Dendritic cell treated with granulocyte-macrophage colony-stimulating factor and Interleukin-4, amounts not matched to agents 40 ng/mL and 50 ng/mL, for 4 days (primary cell): ENCODE measurements at regions of chr5 and their contacts with region 1.

Region 1: DNA sequence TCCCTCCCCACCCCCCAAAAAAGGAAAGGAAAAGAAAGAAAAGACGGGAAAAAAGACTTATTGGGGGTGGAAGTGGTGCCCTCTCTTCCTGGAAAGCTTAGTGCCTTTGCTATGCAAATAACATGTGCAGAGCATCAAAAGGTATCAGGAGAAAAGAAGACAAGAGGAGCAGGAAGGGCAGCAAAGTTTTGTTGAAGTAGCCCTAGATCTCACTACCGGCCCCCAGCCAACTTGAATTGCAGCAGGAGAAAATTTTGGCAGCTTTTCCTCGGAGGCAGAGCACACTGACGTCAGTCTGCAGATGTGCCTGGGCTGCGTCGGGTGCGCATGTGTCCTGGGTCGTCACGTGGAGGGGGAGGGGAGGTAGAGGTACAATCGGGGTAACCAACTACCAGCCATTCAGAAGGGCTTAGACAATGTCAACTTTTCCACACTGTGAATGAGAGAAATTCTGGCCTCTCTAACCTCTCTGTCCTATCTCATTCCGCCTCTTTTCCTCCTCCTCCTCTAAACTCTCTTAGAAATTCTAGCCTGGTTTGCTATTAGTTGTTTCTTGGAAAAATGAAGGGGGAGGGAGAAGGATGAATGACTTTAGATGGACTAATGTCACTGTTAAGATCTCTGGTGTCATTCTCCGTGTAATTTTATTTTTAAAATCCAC is at the start of gene ADAMTS6:
- H3K4me3 Mint-ChIP-seq: peak within 1 kb of the TSS; percentile 86
- H3K27ac Mint-ChIP-seq: peak within 1 kb of the TSS; percentile 78
- H3K4me1 Mint-ChIP-seq: peaks cover 13% of the 10 kb centered on the region
- H3K27me3 Mint-ChIP-seq: peaks cover 5% of the 10 kb centered on the region

Region 2: GRCh38 chr5:64634997-64635686 is 846.6 kb before region 1 on chr5:
- intact Hi-C with region 1: loop called (anchors 5 kb)
- H3K4me3 Mint-ChIP-seq: no peak overlapping the region
- H3K27ac Mint-ChIP-seq: no peak overlapping the region
- H3K4me1 Mint-ChIP-seq: peaks cover 7% of the 10 kb centered on the region
- H3K27me3 Mint-ChIP-seq: peaks cover 7% of the 10 kb centered on the region

Region 3: DNA sequence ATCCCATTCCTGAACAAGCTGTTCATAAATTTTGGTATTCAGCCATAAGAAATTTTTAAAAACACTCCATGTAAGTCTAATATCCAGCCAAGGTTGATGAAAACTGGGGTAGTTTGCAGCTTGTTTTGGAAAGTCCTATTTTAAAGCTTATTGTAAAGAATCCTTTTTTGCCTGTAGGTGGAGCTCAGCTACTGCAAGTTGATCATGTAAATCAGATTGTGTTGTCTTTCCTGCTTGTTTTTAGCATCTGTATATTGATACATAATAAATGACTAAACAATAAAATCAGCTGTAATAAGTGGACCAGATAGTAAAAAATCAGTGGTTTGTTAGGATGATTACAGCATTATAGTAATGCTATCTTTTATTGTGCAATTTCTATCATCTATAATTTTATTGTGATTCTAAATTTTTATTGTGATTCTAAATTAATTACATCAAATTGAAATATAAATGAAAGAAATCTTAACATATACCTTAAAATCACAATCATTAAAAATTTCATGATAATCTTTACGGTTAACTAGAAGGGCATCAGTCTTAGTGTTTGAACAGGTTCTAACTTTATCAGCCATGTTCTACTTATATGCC is 670.6 kb before region 1 on chr5:
- intact Hi-C with region 1: loop called (anchors 1 kb)
- H3K4me3 Mint-ChIP-seq: no peak overlapping the region
- H3K27ac Mint-ChIP-seq: no peak overlapping the region
- H3K4me1 Mint-ChIP-seq: no peaks in the 10 kb centered on the region
- H3K27me3 Mint-ChIP-seq: no peaks in the 10 kb centered on the region

Region 4: GRCh38 chr5:64958757-64959391 is 522.9 kb before region 1 on chr5:
- intact Hi-C with region 1: loop called (anchors 2 kb)
- H3K4me3 Mint-ChIP-seq: no peak overlapping the region
- H3K27ac Mint-ChIP-seq: no peak overlapping the region
- H3K4me1 Mint-ChIP-seq: peaks cover 5% of the 10 kb centered on the region
- H3K27me3 Mint-ChIP-seq: no peaks in the 10 kb centered on the region

Region 5: DNA sequence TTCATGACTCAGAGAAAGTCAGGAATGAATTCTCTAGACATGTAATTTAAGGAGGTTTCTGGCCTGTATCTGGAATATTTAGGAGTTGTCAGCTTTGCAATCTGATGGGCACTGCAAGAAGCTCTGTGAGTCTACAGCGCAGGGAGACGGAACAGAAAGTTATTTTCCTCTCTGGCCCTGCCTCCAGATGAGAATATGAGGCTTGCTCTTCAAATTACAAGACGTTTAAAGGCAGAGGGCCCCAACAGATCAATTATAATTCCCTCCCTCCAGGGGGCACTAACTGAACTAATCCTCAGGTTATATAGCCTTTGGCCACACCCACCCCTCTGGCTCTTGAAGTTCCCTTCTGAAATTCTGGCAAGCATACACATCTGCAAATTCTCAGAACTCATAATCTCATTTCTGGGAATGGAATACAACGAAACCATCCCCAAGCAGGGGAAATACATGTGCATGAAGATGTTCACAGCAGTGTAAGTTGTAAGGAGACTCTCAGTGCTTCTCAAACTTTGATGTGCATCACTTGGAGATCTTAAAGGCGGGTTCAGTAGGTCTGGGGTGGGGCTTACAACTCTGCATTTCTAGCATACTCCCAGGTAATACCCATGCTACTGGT is 405.4 kb before region 1 on chr5:
- intact Hi-C with region 1: loop called (anchors 5 kb)
- H3K4me3 Mint-ChIP-seq: no peak overlapping the region
- H3K27ac Mint-ChIP-seq: peak overlapping the region; percentile 21
- H3K4me1 Mint-ChIP-seq: peaks cover 54% of the 10 kb centered on the region
- H3K27me3 Mint-ChIP-seq: peaks cover 19% of the 10 kb centered on the region

Region 6: DNA sequence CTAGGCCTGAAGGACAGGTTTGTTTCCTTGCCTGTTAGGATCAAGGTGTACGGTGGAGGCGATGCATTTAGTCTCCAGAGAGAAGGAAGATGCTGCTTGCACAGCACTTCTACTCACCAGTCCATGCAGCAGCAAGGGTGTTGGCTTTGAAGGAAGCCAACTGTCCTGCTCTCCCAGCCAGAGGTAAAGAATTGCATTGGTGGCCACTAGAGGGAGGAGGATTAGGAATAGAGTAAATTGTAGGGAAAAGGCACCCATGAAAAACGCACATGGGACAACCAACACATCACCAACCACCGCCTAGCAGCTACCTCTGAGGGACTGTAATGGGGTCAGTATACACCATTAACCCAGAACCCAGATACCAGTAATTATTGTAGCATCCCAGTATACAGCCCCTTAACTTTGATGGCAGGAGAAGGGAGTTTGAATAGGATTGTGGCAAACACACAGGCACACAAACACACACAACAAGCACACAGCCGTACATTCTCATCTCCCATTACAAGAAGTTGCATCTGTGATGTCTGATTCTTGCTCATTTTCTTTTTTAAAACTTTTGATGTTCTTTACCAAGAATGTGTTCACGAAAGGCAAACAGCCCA is 267.7 kb before region 1 on chr5:
- intact Hi-C with region 1: loop called (anchors 10 kb)
- H3K4me3 Mint-ChIP-seq: no peak overlapping the region
- H3K27ac Mint-ChIP-seq: no peak overlapping the region
- H3K4me1 Mint-ChIP-seq: no peaks in the 10 kb centered on the region
- H3K27me3 Mint-ChIP-seq: no peaks in the 10 kb centered on the region

Region 7: DNA sequence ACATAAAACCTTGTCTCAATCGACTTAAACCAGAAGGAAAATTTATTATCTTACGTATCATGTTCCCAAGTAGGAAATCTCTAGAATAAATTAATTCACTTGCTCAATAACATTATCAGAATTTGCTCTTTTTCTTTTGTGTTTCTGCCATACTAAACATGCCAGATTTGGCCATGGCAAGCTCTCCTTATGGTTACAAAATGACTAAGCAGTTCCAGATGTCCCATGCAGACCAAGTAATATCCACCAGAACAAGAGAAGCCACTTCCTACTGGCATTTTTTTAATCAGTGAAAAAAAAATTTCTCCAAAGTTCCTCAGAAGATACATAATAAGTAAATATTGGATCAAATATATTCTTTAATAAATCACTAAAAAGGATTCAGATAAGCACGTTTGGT is 25.2 kb after region 1 on chr5:
- intact Hi-C with region 1: no loop called
- H3K4me3 Mint-ChIP-seq: no peak overlapping the region
- H3K27ac Mint-ChIP-seq: no peak overlapping the region
- H3K4me1 Mint-ChIP-seq: no peaks in the 10 kb centered on the region
- H3K27me3 Mint-ChIP-seq: no peaks in the 10 kb centered on the region

Region 8: GRCh38 chr5:66010476-66010875 is 528.7 kb after region 1 on chr5:
- intact Hi-C with region 1: no loop called
- H3K4me3 Mint-ChIP-seq: no peak overlapping the region
- H3K27ac Mint-ChIP-seq: no peak overlapping the region
- H3K4me1 Mint-ChIP-seq: peaks cover 6% of the 10 kb centered on the region
- H3K27me3 Mint-ChIP-seq: no peaks in the 10 kb centered on the region